Body of pancreas (tissue), 4 donors: ENCODE measurements at regions of chr12 and their contacts with region 1.

Region 1: GRCh38 chr12:104286538-104287482 is 16.7 kb upstream of the EID3 start:
- DNase-seq: peak; percentile 92 to 95 (median 94)
- ATAC-seq: peak; percentile 90
- H3K4me3 ChIP-seq: peak overlapping the region; percentile 17 to 37
- H3K27ac ChIP-seq: peak overlapping the region; percentile 76 to 95 (median 90)
- H3K4me1 ChIP-seq: peaks cover 29% of the 10 kb centered on the region
- H3K27me3 ChIP-seq: no peaks in the 10 kb centered on the region
- CTCF ChIP-seq: peak in 2 of 7 experiments; percentile 14 to 18
- POLR2A ChIP-seq: peak; percentile 47 to 93 (median 85)

Region 2: DNA sequence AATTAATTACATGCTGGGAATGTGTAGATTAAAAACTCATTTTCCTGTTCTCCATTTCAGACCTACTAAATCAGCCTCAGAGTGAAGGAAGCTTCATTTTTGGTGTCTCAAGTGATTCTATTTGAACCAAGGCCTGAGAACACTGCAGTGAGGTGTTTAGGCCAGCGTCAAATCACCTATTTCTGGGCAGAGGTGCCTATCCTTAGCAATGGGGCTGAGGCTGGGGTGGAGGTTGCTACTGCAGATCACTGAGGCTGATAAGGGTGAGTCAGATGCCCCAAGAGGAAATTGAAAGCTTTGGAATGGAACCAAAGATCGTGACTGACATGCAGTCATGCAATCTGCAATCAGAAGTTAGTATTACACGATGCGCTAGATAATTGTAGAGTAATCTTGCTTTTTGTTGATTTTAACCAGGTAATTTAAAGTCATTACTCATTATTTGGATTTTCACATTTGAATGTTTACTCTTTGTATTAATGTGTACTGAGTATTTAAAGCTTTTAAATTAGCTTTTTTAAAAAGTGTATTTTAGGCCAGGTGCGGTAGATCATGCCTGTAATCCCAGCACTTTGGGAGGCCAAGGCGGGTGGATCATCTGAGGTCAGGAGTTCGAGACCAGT is 66.8 kb before region 1 on chr12:
- intact Hi-C with region 1: loop called (anchors 10 kb)
- DNase-seq: peak; percentile 9 to 40 (median 28)
- ATAC-seq: peak; percentile 46
- H3K4me3 ChIP-seq: no peak overlapping the region
- H3K27ac ChIP-seq: peak overlapping the region; percentile 36 to 84 (median 72)
- H3K4me1 ChIP-seq: peaks cover 29% of the 10 kb centered on the region
- H3K27me3 ChIP-seq: no peaks in the 10 kb centered on the region
- CTCF ChIP-seq: no peak
- POLR2A ChIP-seq: no peak